ENCODE measurements at regions of chr2 and their contacts with region 1.

Region 1: DNA sequence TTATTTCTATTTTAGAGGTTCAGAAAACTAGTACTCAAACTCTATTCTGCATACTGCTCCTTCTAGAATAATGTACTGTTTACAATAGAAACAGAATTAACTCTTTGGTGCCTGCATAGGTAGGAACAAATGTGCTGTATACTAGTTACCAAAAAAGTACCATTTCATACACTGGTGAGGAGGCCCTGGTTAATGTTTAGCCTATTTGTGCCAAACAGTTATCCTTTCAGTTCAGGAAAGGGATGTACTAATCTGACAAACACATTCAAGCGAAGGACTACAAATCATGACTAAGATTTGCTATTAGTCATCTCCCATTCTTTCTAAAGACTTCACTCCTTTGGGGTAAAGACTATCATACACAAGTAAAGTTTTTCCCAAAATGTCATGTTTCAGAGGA is 47.4 kb downstream of the EXOC6B start:
- DNase-seq: no peak
- ATAC-seq: no peak
- H3K4me3 ChIP-seq: no peak overlapping the region
- H3K27ac ChIP-seq: no peak overlapping the region
- H3K4me1 ChIP-seq: no peaks in the 10 kb centered on the region; a peak in 1 of 5 replicates
- H3K27me3 ChIP-seq: no peaks in the 10 kb centered on the region
- CTCF ChIP-seq: no peak
- EP300 ChIP-seq: no peak
- POLR2A ChIP-seq: no peak
- RAD21 ChIP-seq: no peak

Region 2: DNA sequence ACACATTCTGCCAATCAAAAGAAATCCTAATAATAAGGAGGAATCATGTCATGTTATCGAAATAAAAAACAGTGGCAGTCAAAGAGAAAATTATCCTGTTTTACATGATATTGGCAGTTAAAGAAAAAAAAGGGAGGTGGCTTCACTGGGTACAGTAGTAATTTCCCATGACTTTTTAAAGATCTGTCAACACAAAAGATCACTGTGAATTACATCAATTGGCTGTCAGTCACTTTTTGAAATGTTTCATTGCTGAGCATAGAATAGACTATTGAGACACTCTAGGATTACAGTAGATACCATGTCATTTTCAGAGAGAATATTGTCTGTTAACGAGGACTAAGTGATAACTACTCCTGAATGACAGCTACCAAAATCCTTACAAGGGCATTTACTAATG is 295.1 kb before region 1 on chr2:
- CTCF ChIA-PET with region 1: no interaction called
- POLR2A ChIA-PET with region 1: no interaction called
- in situ Hi-C with region 1: no loop called
- intact Hi-C with region 1: no loop called
- DNase-seq: no peak
- ATAC-seq: no peak
- H3K4me3 ChIP-seq: no peak overlapping the region
- H3K27ac ChIP-seq: no peak overlapping the region
- H3K4me1 ChIP-seq: no peaks in the 10 kb centered on the region
- H3K27me3 ChIP-seq: no peaks in the 10 kb centered on the region
- CTCF ChIP-seq: no peak
- EP300 ChIP-seq: no peak
- POLR2A ChIP-seq: no peak
- RAD21 ChIP-seq: no peak

Region 3: DNA sequence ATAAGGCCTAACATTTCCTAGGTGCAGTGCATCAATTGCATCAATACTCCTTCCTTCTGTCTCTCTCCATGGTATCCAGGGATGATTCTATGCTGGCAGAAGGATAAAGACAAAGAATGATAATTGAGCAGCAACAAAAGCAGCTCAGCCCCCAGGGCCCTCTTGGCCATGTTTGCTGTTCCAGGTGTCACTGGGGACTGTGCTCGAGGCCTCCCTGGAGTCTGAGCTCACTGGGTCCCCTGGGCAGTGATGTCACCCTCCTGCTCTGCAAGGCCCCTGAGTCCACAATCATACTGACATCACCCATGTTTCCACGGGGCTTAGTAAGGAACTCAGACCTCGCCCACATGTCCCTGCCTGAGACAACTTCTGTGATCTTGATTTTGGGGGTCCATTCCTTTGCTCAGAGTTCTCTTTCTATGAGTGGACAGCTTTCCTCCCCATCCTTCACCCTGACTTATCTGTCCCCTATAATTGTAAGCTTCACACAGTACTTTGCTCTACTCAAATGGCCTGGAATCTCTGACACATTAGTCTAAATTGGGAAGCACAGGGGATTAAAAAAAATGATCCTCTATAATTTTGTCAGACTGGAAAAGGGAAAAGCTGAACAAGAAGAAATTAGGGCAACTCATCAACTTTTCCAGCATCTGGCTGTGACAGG is 63.2 kb after region 1 on chr2:
- CTCF ChIA-PET with region 1: no interaction called
- POLR2A ChIA-PET with region 1: interaction called, 3 read pairs
- in situ Hi-C with region 1: loop called (anchors 5 kb)
- intact Hi-C with region 1: no loop called
- DNase-seq: no peak
- ATAC-seq: no peak
- H3K4me3 ChIP-seq: no peak overlapping the region
- H3K27ac ChIP-seq: no peak overlapping the region
- H3K4me1 ChIP-seq: no peaks in the 10 kb centered on the region
- H3K27me3 ChIP-seq: peaks cover 4 to 9% of the 10 kb centered on the region in 2 experiments; a peak in 3 of 5 replicates
- CTCF ChIP-seq: no peak
- EP300 ChIP-seq: no peak
- POLR2A ChIP-seq: no peak
- RAD21 ChIP-seq: no peak

Region 4: GRCh38 chr2:72887754-72888437 is 109.5 kb after region 1 on chr2:
- CTCF ChIA-PET with region 1: no interaction called
- POLR2A ChIA-PET with region 1: no interaction called
- in situ Hi-C with region 1: no loop called
- intact Hi-C with region 1: no loop called
- DNase-seq: peak; percentile 77 to 90 (median 81)
- ATAC-seq: peak; percentile 87
- H3K4me3 ChIP-seq: peak overlapping the region; percentile 85
- H3K27ac ChIP-seq: peak overlapping the region; percentile 62; the same call in 2 of the 3 replicates
- H3K4me1 ChIP-seq: peaks cover 9 to 15% of the 10 kb centered on the region in 2 experiments; a peak in 4 of 5 replicates
- H3K27me3 ChIP-seq: 0 out of 5 replicates have a peak, but pooled peaks cover 3 to 5% of the 10 kb centered on the region in 2 experiments
- CTCF ChIP-seq: peak; percentile 91 to 97 (median 94)
- EP300 ChIP-seq: peak; percentile 3; the same call in 1 of the 2 replicates
- POLR2A ChIP-seq: no peak
- RAD21 ChIP-seq: peak; percentile 41 to 64